Esophagus muscularis mucosa (tissue), 4 donors: ENCODE measurements at regions of chr17 and their contacts with region 1.

Region 1: DNA sequence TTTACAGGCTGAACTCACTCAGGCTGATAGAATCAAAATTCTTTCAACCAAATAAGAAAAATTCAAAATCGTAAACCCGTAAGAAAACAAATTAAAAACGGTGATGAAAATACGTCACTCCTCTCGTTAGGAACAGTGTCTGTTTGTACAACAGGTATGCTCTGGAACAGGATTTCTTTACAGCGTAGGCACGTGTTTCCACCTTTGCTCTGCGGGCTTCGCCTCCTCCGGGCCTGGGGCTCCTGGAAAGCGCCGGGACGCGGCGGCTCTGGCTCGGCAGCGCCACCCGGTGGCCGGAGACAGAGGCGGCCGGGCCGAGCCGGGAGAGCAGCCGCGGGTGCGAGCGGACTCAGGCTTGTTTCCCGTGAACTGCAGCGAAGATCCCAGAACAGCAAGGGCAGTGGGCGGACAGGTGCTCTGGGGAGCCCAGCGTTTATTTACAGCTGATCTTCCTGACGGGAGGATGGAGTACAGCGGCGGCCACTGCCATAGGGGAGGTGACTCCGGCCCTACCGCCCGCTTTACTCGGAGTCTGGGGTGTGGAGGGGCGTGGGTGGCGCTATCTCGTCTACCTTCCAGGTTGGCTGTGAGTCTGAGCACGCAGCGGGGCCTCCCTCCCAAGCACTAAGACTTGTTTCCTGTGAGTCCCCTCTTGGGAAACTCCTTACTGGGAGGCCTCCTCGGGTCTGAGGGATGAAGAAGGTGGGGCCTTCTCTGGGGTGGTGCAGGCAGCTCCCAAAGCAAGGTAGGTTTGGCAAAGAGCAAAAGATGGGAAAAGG is 40.5 kb upstream of the ATP2A3 start:
- DNase-seq: no peak
- H3K4me3 ChIP-seq: no peak overlapping the region
- H3K27ac ChIP-seq: peak overlapping the region in 2 of 4 donors; percentile 23 to 39
- H3K4me1 ChIP-seq: peaks cover 16 to 65% (median 53%) of the 10 kb centered on the region in 4 donors
- H3K27me3 ChIP-seq: no peaks in the 10 kb centered on the region
- CTCF ChIP-seq: peak in 2 of 3 experiments; percentile 91 to 94
- EP300 ChIP-seq: no peak
- POLR2A ChIP-seq: no peak

Region 2: DNA sequence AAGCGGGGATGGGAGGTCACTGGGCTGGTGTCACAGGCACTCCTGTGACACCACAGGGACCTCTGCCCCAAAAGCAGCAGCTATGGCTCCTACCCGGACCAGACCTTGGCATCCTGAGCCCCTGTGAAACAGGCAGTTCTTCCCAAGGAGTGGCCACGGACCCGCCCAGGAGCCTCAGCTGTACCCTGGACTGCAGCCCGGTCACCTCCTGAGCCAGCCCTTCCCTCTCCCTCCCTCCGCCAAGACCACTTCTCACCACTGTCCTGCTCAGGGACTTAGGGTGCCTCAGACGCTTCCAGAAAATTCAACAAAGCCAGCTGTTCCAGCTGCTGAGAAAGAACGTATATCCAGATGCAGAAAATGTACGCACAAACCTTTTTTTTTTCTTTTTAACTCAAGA is 144.8 kb before region 1 on chr17:
- intact Hi-C with region 1: loop called (anchors 5 kb)
- DNase-seq: no peak
- H3K4me3 ChIP-seq: no peak overlapping the region
- H3K27ac ChIP-seq: no peak overlapping the region
- H3K4me1 ChIP-seq: peaks cover 0 to under 1% (median under 1%) of the 10 kb centered on the region in 4 donors
- H3K27me3 ChIP-seq: no peaks in the 10 kb centered on the region
- CTCF ChIP-seq: no peak
- EP300 ChIP-seq: no peak
- POLR2A ChIP-seq: no peak

Region 3: DNA sequence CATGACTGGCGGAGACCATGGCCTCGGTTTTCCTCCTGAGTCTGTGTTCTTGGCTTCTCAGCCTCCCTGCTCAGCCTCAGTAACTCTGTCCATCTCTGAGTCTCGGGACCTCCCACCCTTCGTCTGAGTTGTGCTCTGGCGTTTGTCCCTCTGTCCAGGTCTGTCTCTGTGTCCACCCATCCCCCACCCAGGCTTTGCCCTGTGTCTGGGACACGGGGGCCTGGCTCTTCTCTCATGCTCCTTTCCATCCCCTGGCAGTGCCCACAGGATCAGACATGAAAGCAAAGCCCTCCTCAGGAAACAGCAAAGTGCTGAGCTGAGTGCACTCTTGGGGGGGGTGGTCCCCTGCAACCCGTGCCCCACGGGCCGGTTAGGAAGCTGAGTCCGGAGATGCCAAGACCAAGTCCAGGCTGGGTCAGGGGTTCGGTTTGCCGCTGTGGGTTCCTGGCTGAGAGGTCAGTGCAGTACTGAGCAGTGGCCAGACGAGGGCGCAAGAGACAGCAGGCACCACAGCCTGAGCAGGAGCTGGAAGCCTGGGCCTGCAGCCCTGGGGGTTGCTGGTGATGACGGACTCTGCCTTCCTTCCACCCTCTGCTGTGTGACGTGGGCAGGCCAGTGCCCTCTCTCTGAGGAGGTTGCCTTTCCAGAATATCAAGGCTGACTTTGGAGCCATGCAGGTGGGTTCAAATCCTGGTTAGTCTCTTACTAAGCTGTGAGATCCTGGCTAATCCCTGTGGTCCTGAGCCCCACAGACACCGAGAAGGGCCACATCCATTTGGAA is 91.0 kb before region 1 on chr17:
- intact Hi-C with region 1: loop called (anchors 2 kb)
- DNase-seq: no peak
- H3K4me3 ChIP-seq: peak overlapping the region in 3 of 4 donors; percentile 3 to 28 (median 11)
- H3K27ac ChIP-seq: peak overlapping the region; percentile 20 to 82 (median 68)
- H3K4me1 ChIP-seq: peaks cover 16 to 56% (median 41%) of the 10 kb centered on the region in 4 donors
- H3K27me3 ChIP-seq: no peaks in the 10 kb centered on the region
- CTCF ChIP-seq: peak; percentile 94 to 99 (median 97)
- EP300 ChIP-seq: no peak
- POLR2A ChIP-seq: no peak

Region 4: GRCh38 chr17:3935140-3935542 is 69.6 kb before region 1 on chr17:
- intact Hi-C with region 1: loop called (anchors 5 kb)
- DNase-seq: no peak
- H3K4me3 ChIP-seq: no peak overlapping the region
- H3K27ac ChIP-seq: no peak overlapping the region
- H3K4me1 ChIP-seq: no peaks in the 10 kb centered on the region
- H3K27me3 ChIP-seq: no peaks in the 10 kb centered on the region
- CTCF ChIP-seq: peak; percentile 57 to 71 (median 69)
- EP300 ChIP-seq: no peak
- POLR2A ChIP-seq: no peak

Region 5: GRCh38 chr17:3964203-3965117 is 40.2 kb before region 1 on chr17 and contains the start of gene ATP2A3:
- intact Hi-C with region 1: no loop called
- DNase-seq: no peak
- H3K4me3 ChIP-seq: peak within 1 kb of the TSS; percentile 59 to 72 (median 61)
- H3K27ac ChIP-seq: peak within 1 kb of the TSS; percentile 69 to 81 (median 76)
- H3K4me1 ChIP-seq: peaks cover 31 to 61% (median 58%) of the 10 kb centered on the region in 4 donors
- H3K27me3 ChIP-seq: peaks cover 0 to 44% (median 6%) of the 10 kb centered on the region in 4 donors
- CTCF ChIP-seq: no peak
- EP300 ChIP-seq: no peak
- POLR2A ChIP-seq: no peak
- total RNA-seq, gene ATP2A3: 17.9 to 35.4 (median 24.8) TPM